ENCODE measurements at regions of chr1 and their contacts with region 1.

Region 1: DNA sequence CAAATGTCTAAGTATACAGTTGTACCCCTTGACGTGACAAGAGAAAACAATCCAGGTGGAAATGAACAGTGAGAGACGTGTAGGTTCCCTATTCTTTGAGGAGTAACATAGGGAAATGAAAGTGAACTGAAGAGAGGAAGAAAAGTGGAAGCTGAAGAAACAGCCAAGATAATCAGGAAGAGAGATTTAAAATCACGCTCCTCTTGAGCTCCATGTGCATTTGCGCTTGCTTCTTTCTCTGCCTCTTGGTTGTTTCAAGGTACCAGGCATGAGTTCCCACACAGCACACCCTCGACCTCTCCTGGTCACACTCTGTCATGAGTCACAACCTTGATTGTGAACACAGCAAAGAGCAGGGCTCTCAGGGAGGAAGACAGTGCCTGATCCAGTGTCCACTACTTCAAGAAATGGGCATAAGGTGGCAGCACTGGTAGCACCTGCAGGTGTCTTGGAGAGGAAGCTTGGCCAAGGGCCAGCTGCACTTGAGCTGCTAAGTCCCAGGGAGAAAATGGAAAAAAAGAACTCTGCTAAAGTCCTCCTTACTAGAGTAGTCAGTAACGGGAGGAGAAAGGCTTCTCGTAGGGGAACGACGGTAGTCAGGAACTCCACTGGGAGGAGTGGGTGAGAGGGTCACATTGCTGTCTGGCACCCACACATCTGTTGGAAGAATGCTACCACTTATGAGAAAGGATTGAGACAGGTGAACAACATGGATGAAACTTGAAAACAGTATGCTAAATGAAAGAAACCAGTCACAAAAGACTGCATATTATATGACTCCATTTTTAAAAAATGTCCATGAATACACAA is 18.3 kb upstream of the ARID1A start:
- DNase-seq: peak; percentile 70
- ATAC-seq: peak; percentile 98
- H3K4me3 Mint-ChIP-seq: no peak overlapping the region
- H3K27ac Mint-ChIP-seq: peak overlapping the region; percentile 19
- H3K4me1 Mint-ChIP-seq: peaks cover 20% of the 10 kb centered on the region
- H3K27me3 Mint-ChIP-seq: no peaks in the 10 kb centered on the region

Region 2: GRCh38 chr1:26695356-26696118 is 18.0 kb after region 1 on chr1 and contains the start of gene ARID1A:
- CTCF ChIA-PET with region 1: interaction called, 43 read pairs
- DNase-seq: peak; percentile 97
- ATAC-seq: peak; percentile 69
- H3K4me3 Mint-ChIP-seq: peak within 1 kb of the TSS; percentile 91
- H3K27ac Mint-ChIP-seq: peak within 1 kb of the TSS; percentile 98
- H3K4me1 Mint-ChIP-seq: peaks cover 31% of the 10 kb centered on the region
- H3K27me3 Mint-ChIP-seq: no peaks in the 10 kb centered on the region
- total RNA-seq, gene ARID1A: 92.4 to 112 TPM